ENCODE measurements at regions of chr7 and their contacts with region 1.

Region 1: GRCh38 chr7:26200444-26201246 is at the start of gene HNRNPA2B1:
- DNase-seq: peak; percentile 97
- H3K4me3 Mint-ChIP-seq: peak within 1 kb of the TSS; percentile 100
- H3K27ac Mint-ChIP-seq: peak within 1 kb of the TSS; percentile 100
- H3K4me1 Mint-ChIP-seq: peaks cover 47% of the 10 kb centered on the region
- H3K27me3 Mint-ChIP-seq: no peaks in the 10 kb centered on the region
- total RNA-seq, gene HNRNPA2B1: 821 and 823 TPM in 2 replicates

Region 2: DNA sequence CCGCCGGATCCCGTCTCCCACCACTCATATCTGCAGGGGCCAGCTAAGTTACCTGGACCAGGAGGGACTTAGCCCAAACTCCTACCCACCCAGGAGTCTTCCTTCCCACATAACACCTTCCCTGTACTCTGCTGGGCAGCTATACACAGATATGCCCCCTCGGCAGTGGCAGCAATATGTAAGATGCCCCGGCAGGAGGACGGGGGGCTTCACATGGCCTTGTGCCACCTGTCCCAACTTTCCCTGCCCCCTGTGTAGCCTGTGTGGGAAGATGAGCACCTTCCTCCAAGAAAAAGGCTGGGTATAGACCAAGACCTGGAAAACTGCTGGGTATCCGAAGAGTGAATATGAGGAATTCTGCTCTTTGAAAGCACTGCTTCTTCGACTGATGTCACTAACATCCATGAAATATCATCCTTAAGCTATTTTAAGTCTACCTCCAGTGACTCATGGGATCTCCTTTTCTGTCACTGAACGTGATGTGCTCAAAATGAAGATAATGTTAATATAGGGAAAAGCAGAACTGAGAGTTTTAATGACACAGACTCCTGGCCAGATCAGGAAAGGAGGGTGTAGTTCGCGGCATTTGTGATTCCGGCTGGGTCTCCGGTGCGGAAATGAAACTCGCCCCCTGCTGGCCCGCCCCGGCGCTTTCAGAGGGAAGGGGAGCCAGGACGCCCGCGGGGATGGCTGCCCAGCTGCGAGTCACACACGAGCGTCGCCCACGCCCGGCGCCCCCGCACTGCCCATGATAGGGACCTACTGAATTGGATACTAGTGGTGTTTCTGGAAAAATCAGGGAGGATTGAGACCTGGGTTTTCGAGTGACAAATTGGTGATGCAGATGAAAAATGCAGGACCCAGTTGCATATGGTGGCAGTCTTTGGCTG is 305.5 kb before region 1 on chr7:
- intact Hi-C with region 1: loop called (anchors 5 kb)
- DNase-seq: peak; percentile 51
- H3K4me3 Mint-ChIP-seq: peak overlapping the region; percentile 3
- H3K27ac Mint-ChIP-seq: no peak overlapping the region
- H3K4me1 Mint-ChIP-seq: peaks cover 33% of the 10 kb centered on the region
- H3K27me3 Mint-ChIP-seq: peaks cover 6% of the 10 kb centered on the region

Region 3: DNA sequence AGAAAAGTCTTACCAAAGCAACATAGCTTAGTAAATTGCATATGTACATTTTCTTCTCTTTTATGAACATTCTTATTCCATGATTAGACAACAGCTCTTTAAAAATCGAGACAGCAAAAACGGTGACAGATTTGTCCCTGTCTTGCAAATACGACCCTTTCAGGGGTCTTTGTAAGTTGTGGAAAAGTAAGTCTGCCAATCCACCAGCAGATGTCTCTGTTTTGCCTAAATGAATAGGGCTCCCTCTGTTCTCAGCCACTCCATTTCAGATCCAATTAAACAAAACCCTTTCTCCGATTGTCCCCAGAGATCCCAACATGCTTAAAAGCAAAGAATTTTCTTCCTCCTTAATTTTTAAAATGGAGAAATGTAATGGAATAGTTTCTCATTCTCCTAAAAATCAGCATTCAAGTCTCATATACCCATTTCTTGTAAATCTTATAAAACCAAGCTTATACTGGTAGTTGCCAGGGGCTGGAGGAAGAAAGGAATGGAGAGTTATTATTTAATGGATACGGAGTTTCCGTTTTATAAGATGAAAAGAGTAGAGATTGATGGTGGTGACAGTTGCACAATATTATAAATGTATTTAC is 109.6 kb before region 1 on chr7:
- intact Hi-C with region 1: loop called (anchors 1 kb)
- DNase-seq: no peak
- H3K4me3 Mint-ChIP-seq: no peak overlapping the region
- H3K27ac Mint-ChIP-seq: peak overlapping the region; percentile 6
- H3K4me1 Mint-ChIP-seq: peaks cover 22% of the 10 kb centered on the region
- H3K27me3 Mint-ChIP-seq: no peaks in the 10 kb centered on the region

Region 4: GRCh38 chr7:26216049-26216448 is 15.4 kb after region 1 on chr7:
- intact Hi-C with region 1: loop called (anchors 1 kb)
- DNase-seq: no peak
- H3K4me3 Mint-ChIP-seq: no peak overlapping the region
- H3K27ac Mint-ChIP-seq: no peak overlapping the region
- H3K4me1 Mint-ChIP-seq: peaks cover 15% of the 10 kb centered on the region
- H3K27me3 Mint-ChIP-seq: peaks cover 4% of the 10 kb centered on the region

Region 5: GRCh38 chr7:26667500-26668133 is 467.0 kb after region 1 on chr7:
- intact Hi-C with region 1: loop called (anchors 10 kb)
- DNase-seq: peak; percentile 47
- H3K4me3 Mint-ChIP-seq: no peak overlapping the region
- H3K27ac Mint-ChIP-seq: no peak overlapping the region
- H3K4me1 Mint-ChIP-seq: peaks cover 16% of the 10 kb centered on the region
- H3K27me3 Mint-ChIP-seq: peaks cover 39% of the 10 kb centered on the region